Activated CD8-positive, alpha-beta T cell treated with anti-CD3 and anti-CD28 coated beads for 36 hours (primary cell): ENCODE measurements at regions of chr2 and their contacts with region 1.

Region 1: GRCh38 chr2:113138428-113139322 is 11.3 kb downstream of the IL1RN start:
- DNase-seq: peak; percentile 62
- ATAC-seq: peak; percentile 84
- H3K4me3 Mint-ChIP-seq: peak overlapping the region; percentile 20
- H3K27ac Mint-ChIP-seq: peak overlapping the region; percentile 75
- H3K4me1 Mint-ChIP-seq: peaks cover 26% of the 10 kb centered on the region
- H3K27me3 Mint-ChIP-seq: no peaks in the 10 kb centered on the region
- CTCF ChIP-seq: peak; percentile 86

Region 2: GRCh38 chr2:113098041-113098440 is 40.6 kb before region 1 on chr2:
- CTCF ChIA-PET with region 1: interaction called, 13 read pairs
- POLR2A ChIA-PET with region 1: no interaction called
- intact Hi-C with region 1: no loop called
- DNase-seq: peak; percentile 14
- ATAC-seq: peak; percentile 81
- H3K4me3 Mint-ChIP-seq: peak overlapping the region; percentile 26
- H3K27ac Mint-ChIP-seq: peak overlapping the region; percentile 76
- H3K4me1 Mint-ChIP-seq: peaks cover 32% of the 10 kb centered on the region
- H3K27me3 Mint-ChIP-seq: no peaks in the 10 kb centered on the region
- CTCF ChIP-seq: no peak

Region 3: GRCh38 chr2:113148606-113149560 is 10.2 kb after region 1 on chr2:
- CTCF ChIA-PET with region 1: interaction called, 27 read pairs
- POLR2A ChIA-PET with region 1: interaction called, 3 read pairs
- intact Hi-C with region 1: no loop called
- DNase-seq: no peak
- ATAC-seq: no peak
- H3K4me3 Mint-ChIP-seq: no peak overlapping the region
- H3K27ac Mint-ChIP-seq: no peak overlapping the region
- H3K4me1 Mint-ChIP-seq: no peaks in the 10 kb centered on the region
- H3K27me3 Mint-ChIP-seq: no peaks in the 10 kb centered on the region
- CTCF ChIP-seq: no peak

Region 4: DNA sequence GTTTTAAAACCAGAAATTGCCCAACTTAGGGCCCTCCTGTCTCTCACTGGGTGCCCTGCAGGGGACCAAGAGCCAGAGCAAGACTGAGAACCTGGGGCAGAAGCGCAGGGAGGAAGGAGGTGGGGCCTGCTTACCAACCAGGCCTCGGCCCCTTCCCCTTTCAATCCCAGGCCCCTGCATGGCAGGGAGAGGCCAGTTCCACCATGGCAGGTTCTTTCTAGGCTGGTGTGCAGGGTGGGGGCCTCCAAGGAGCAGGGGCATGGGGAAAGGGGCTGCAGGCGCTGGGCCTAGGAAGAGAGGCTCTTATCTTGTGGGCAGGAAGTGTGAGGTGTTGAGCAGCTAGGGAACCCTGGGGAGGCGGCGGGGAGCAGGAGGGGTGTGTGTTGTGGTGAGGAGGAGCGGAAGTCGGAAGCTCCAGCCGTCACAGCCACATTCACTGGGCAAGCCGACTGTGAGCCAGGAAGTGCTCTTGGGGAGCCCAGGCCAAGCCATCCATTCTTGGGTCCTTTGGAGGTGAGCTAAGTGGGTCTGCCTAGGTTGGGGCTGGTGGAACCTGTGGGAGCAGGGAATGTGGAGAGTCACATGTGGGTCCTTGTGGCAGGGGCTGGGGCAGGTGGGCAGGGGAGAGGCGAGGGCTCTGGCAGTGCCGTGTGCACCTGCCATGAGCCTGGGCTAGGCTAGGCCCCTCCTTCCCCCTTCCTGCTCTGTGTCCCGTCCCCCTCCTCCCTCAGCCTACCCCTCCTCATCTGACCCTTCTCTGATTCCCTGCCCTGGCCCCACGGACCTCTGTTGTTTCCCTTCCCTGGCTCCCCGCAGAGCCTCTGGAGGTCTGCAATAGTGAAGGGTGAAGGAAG is 35.1 kb after region 1 on chr2 and contains the start of gene PSD4:
- CTCF ChIA-PET with region 1: interaction called, 127 read pairs
- POLR2A ChIA-PET with region 1: interaction called, 26 read pairs
- intact Hi-C with region 1: no loop called
- DNase-seq: peak; percentile 95
- ATAC-seq: peak; percentile 77
- H3K4me3 Mint-ChIP-seq: peak within 1 kb of the TSS; percentile 84
- H3K27ac Mint-ChIP-seq: peak within 1 kb of the TSS; percentile 98
- H3K4me1 Mint-ChIP-seq: peaks cover 68% of the 10 kb centered on the region
- H3K27me3 Mint-ChIP-seq: no peaks in the 10 kb centered on the region
- CTCF ChIP-seq: no peak
- total RNA-seq, gene PSD4: 247 to 251 TPM

Region 5: GRCh38 chr2:113203901-113204519 is 65.3 kb after region 1 on chr2:
- CTCF ChIA-PET with region 1: interaction called, 212 read pairs
- POLR2A ChIA-PET with region 1: interaction called, 4 read pairs
- intact Hi-C with region 1: loop called (anchors 2 kb)
- DNase-seq: peak; percentile 85
- ATAC-seq: peak; percentile 86
- H3K4me3 Mint-ChIP-seq: no peak overlapping the region
- H3K27ac Mint-ChIP-seq: peak overlapping the region; percentile 77
- H3K4me1 Mint-ChIP-seq: peaks cover 16% of the 10 kb centered on the region
- H3K27me3 Mint-ChIP-seq: no peaks in the 10 kb centered on the region
- CTCF ChIP-seq: peak; percentile 78

Region 6: GRCh38 chr2:113248997-113249770 is 110.5 kb after region 1 on chr2:
- CTCF ChIA-PET with region 1: interaction called, 30 read pairs
- POLR2A ChIA-PET with region 1: no interaction called
- intact Hi-C with region 1: no loop called
- DNase-seq: peak; percentile 86
- ATAC-seq: peak; percentile 46
- H3K4me3 Mint-ChIP-seq: no peak overlapping the region
- H3K27ac Mint-ChIP-seq: peak overlapping the region; percentile 73
- H3K4me1 Mint-ChIP-seq: peaks cover 45% of the 10 kb centered on the region
- H3K27me3 Mint-ChIP-seq: no peaks in the 10 kb centered on the region
- CTCF ChIP-seq: peak; percentile 90

Region 7: GRCh38 chr2:113390124-113390849 is 251.6 kb after region 1 on chr2:
- CTCF ChIA-PET with region 1: interaction called, 22 read pairs
- POLR2A ChIA-PET with region 1: no interaction called
- intact Hi-C with region 1: no loop called
- DNase-seq: peak; percentile 66
- ATAC-seq: peak; percentile 98
- H3K4me3 Mint-ChIP-seq: peak overlapping the region; percentile 55
- H3K27ac Mint-ChIP-seq: peak overlapping the region; percentile 55
- H3K4me1 Mint-ChIP-seq: peaks cover 8% of the 10 kb centered on the region
- H3K27me3 Mint-ChIP-seq: peaks cover 7% of the 10 kb centered on the region
- CTCF ChIP-seq: peak; percentile 96